Body of pancreas (tissue), 4 donors: ENCODE measurements at regions of chr17 and their contacts with region 1.

Region 1: GRCh38 chr17:1179818-1180742 is at the start of gene ABR:
- DNase-seq: peak in 3 of 4 donors; percentile 37 to 44 (median 40)
- ATAC-seq: peak; percentile 33
- H3K4me3 ChIP-seq: peak within 1 kb of the TSS; percentile 4 to 39
- H3K27ac ChIP-seq: peak within 1 kb of the TSS in 1 of 4 donors; percentile 36
- H3K4me1 ChIP-seq: peaks cover 27% of the 10 kb centered on the region
- H3K27me3 ChIP-seq: peaks cover 0 to 18% of the 10 kb centered on the region in 2 donors
- CTCF ChIP-seq: no peak
- POLR2A ChIP-seq: peak in 1 of 3 donors; percentile 4
- total RNA-seq, gene ABR: 32.4 to 46.8 TPM

Region 2: DNA sequence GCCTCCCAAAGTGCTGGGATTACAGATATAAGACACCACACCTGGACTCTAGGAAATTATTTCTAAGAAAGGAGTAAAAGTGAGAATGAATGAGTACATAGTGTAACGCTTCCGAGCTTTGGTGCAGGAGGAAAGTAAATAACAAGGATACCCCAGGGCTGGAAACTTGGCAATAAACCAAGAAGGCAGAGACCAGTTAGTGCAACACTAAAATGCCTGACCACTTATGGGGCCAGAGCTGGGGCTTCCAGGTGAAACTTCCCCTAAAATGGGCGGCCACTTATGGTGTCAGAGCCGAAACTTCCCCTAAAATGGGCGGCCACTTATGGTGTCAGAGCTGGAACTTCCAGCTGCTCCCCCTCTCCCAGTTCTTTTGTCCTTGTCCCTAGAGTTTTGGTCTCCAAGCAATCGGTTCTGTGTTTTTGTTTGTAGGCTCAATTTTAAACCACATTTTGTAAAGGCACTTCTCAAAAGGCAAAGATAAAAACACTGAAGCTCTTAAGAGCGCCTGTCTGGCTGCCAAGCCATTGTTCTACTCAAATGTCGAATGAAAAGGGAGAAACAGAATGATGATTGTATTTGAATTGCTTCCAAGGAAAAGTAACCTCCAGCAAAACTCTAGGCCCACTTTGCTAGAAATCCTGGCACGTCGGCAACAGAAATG is 264.4 kb before region 1 on chr17:
- intact Hi-C with region 1: no loop called
- DNase-seq: no peak
- ATAC-seq: peak; percentile 33
- H3K4me3 ChIP-seq: no peak overlapping the region
- H3K27ac ChIP-seq: peak overlapping the region in 1 of 4 donors; percentile 30
- H3K4me1 ChIP-seq: peaks cover 7% of the 10 kb centered on the region
- H3K27me3 ChIP-seq: no peaks in the 10 kb centered on the region
- CTCF ChIP-seq: no peak
- POLR2A ChIP-seq: no peak

Region 3: DNA sequence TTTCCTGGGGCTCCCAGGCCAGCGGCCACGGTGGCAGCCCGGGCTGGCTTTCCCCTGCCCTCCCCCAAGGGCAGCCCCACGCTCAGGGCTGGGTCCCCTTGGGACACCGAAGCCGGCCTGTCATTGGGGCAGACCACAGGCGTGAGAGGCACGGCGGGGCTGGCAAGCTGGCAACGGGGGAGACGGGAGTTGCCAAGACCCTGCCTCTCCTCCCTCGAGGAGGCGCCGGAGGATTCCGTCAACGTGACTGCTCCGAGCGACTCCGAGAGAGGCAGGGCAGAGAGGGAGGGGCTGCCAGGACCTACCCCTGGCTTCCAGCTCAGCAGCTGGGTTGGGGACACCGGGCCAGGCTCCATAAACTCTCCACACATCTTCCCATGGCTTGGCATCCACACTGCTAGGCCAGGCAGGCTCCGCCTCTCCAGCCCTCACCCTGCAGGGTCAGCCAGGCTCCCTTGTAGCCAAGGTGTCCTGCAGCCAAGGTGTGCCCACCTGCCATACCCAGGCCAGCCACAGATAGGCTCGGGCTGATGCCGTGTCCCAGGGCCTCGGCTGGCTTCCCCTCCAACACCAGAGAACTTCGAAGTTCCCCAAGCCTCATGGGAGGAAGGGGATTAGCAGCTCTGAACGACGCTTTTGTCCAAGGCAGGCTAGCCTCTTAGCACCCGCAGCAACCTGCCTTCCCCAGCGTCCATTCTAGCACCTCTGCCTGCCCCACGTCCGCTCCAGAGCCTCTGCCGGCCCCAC is 157.6 kb before region 1 on chr17:
- intact Hi-C with region 1: no loop called
- DNase-seq: no peak
- ATAC-seq: no peak
- H3K4me3 ChIP-seq: no peak overlapping the region
- H3K27ac ChIP-seq: no peak overlapping the region
- H3K4me1 ChIP-seq: no peaks in the 10 kb centered on the region
- H3K27me3 ChIP-seq: no peaks in the 10 kb centered on the region
- CTCF ChIP-seq: no peak
- POLR2A ChIP-seq: no peak

Region 4: DNA sequence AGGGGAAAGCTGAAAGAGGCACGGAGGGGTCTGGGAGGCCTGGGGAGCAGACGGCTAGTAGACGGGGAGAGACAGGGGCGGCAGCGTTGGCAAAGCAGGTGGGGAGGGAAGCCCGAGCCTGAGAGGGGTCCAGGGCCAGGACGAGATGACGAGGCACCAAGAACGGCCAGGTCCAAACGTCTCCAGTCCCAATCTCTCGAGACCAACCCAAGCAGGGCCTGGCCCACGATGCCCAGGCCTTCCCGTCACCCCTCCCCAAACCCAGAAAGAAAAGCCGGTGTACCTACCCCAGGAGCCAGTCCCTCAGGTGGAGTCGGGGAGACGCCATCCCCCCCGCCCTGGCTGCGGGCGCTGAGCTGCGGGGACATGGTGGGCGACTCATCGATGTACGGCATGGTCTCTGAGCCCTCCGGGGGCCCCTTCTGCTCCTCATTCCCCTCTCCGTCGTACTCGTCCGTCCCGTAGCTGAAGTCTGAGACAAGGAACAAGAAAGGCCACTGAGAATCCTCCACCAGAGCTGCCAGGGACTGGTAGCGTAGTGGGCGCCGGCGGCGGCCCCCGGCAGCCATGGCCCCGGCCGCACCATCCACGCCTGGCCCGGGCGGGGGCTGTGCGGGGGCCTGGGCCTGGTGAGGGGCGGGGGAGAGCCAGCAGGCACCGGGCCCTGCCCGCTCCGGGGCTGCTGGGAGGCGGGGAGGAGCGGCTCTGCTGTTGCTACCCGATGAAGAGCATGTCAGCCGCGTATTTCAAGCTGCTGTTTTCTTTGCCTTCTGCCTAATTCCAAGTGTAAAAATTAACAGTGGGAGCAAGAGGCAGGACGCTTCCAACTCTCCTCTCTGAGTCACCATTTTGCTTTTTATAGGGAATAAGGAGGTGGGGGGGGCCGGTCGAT is 54.9 kb before region 1 on chr17:
- intact Hi-C with region 1: loop called (anchors 5 kb)
- DNase-seq: no peak
- ATAC-seq: no peak
- H3K4me3 ChIP-seq: no peak overlapping the region
- H3K27ac ChIP-seq: no peak overlapping the region
- H3K4me1 ChIP-seq: peaks cover 22% of the 10 kb centered on the region
- H3K27me3 ChIP-seq: no peaks in the 10 kb centered on the region
- CTCF ChIP-seq: no peak
- POLR2A ChIP-seq: no peak

Region 5: DNA sequence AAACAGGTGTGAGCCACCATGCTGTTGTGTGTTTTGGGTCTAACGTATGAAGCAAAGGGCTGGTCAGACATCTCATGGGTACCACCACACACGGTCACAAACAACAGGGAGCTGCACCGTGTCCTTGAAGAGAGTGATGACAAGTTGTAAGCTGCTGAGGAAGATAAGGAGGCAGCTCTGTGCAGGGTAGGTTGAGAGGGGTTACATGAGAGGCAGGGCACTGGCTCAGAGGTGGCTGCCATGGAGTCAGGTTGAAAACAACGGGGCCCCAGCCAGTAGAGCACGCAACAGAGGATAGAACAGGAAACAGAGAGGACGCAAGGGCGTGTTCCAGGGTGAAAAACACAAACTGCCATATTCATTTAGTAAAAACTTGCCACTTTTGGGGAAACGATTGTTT is 151.6 kb after region 1 on chr17:
- intact Hi-C with region 1: no loop called
- DNase-seq: no peak
- ATAC-seq: no peak
- H3K4me3 ChIP-seq: no peak overlapping the region
- H3K27ac ChIP-seq: no peak overlapping the region
- H3K4me1 ChIP-seq: no peaks in the 10 kb centered on the region
- H3K27me3 ChIP-seq: no peaks in the 10 kb centered on the region
- CTCF ChIP-seq: no peak
- POLR2A ChIP-seq: no peak